Mammary epithelial cell (primary cell): ENCODE measurements at regions of chr19 and their contacts with region 1.

Region 1: DNA sequence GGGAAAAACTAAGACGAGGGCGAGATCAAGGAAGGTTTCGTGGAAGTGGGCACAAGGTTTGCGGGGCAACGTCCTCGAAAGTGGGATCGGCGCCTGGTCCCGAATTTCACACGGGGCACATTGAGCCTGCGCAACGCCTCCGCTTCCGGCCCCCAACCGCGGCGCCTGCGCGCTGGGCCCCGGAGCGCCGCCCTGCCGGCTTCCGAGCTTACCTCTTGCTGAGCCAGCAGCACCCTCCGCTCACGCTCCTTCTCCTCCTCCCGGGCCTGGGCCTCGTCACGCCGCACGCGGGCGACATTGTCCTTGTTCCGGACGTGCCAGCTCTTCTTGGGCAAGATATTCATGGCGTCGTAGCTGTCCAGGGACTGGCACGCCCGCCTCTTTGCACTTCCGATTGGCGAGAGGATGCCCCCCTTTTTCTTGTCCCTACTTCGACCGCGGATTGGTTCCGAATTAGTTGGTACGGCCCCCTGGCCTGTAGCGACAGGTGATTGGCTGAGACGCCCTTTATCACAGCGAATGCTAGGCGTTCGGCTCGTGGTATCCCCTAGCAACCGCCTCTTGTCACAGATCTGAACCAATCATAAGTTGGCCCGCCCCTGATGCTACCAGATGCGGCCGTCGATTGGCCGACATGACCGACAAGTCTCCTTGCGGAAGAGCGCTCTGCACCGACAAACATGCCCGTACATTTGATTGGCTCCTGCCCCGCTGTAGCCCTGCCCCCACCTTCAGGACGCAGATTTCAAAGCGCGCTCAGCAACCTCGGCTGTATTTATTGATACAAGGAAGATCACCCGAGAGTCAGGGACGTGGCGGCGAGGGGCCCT is at the start of gene LENG1:
- DNase-seq: peak; percentile 100
- H3K4me3 ChIP-seq: peak within 1 kb of the TSS; percentile 66 to 87 (median 76)
- H3K27ac ChIP-seq: peak within 1 kb of the TSS; percentile 82
- H3K4me1 ChIP-seq: peaks cover 23% of the 10 kb centered on the region
- H3K27me3 ChIP-seq: no peaks in the 10 kb centered on the region
- CTCF ChIP-seq: peak in 1 of 2 donors; percentile 30
- total RNA-seq, gene LENG1: 2.3 to 5.9 TPM

Region 2: GRCh38 chr19:53849237-53849676 is 310.3 kb before region 1 on chr19:
- CTCF ChIA-PET with region 1: no interaction called
- dilution Hi-C with region 1: no loop called
- in situ Hi-C with region 1: no loop called
- intact Hi-C with region 1: no loop called
- DNase-seq: no peak
- H3K4me3 ChIP-seq: no peak overlapping the region
- H3K27ac ChIP-seq: no peak overlapping the region
- H3K4me1 ChIP-seq: no peaks in the 10 kb centered on the region
- H3K27me3 ChIP-seq: no peaks in the 10 kb centered on the region
- CTCF ChIP-seq: no peak

Region 3: GRCh38 chr19:53867225-53868090 is 292.1 kb before region 1 on chr19 and contains the start of gene MYADM:
- CTCF ChIA-PET with region 1: no interaction called
- dilution Hi-C with region 1: no loop called
- in situ Hi-C with region 1: no loop called
- intact Hi-C with region 1: loop called (anchors 2 kb)
- DNase-seq: peak; percentile 97
- H3K4me3 ChIP-seq: peak within 1 kb of the TSS; percentile 45 to 69 (median 67)
- H3K27ac ChIP-seq: peak within 1 kb of the TSS; percentile 83
- H3K4me1 ChIP-seq: peaks cover 11% of the 10 kb centered on the region
- H3K27me3 ChIP-seq: no peaks in the 10 kb centered on the region
- CTCF ChIP-seq: no peak
- total RNA-seq, gene MYADM: 26.5 to 64.1 TPM

Region 4: DNA sequence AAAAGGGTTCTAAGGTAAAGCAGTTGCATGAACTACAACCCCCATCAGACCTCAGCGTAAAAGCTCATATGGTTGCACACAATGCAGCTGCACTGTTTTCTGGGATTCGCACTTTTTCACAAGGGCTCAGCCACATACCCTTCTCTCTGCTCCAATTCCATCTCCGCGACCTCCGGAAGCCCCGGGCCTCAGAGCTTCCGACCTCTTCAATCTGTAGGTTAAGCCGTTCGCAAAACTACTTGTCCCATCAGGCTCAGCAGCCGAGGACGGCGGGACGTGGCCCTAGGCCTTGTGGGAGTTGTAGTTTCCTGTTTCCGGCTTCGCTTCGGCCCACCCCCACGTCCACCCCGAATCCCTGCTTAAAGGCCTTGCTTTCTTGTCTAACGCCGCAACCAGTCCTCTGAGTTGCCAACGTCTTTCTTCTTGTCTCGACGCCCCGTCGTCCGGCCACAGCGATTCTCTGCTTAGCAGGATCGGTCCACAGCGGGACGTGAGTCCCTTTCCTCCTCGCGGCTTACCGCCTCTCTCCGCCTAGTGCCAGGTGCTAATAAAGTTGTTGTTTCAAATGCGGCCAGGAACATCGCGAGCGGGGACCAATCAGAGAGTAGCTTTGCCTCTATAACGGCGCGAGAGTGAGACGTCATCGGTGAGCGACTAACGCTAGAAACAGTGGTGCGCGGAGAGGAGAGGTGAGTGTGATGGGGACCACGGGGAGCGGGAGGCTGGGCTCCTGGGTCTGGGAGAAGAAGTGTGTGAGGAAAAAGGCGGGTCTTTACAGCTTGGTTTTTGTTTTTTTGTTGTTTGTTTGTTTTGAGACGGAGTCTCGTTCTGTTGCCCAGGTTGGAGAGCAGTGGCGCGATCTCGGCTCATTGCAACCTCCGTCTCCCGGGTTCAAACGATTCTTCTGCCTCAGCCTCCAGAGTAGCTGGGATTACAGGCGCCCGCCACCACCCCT is 44.2 kb before region 1 on chr19 and contains the starts of genes PRPF31 and TFPT:
- CTCF ChIA-PET with region 1: no interaction called
- dilution Hi-C with region 1: loop called (anchors 5 kb)
- in situ Hi-C with region 1: no loop called
- intact Hi-C with region 1: no loop called
- DNase-seq: peak; percentile 98
- H3K4me3 ChIP-seq: peak within 1 kb of the TSS; percentile 75 to 92 (median 87)
- H3K27ac ChIP-seq: peak within 1 kb of the TSS; percentile 80
- H3K4me1 ChIP-seq: peaks cover 8% of the 10 kb centered on the region
- H3K27me3 ChIP-seq: no peaks in the 10 kb centered on the region
- CTCF ChIP-seq: no peak
- total RNA-seq, gene PRPF31: 34.2 to 56.4 TPM
- total RNA-seq, gene TFPT: 9.3 to 23.2 TPM

Region 5: GRCh38 chr19:54137086-54137921 is 22.3 kb before region 1 on chr19 and contains the start of gene CNOT3:
- CTCF ChIA-PET with region 1: interaction called, 6 read pairs
- dilution Hi-C with region 1: no loop called
- in situ Hi-C with region 1: no loop called
- intact Hi-C with region 1: loop called (anchors 1 kb)
- DNase-seq: peak; percentile 100
- H3K4me3 ChIP-seq: peak within 1 kb of the TSS; percentile 67 to 86 (median 69)
- H3K27ac ChIP-seq: peak within 1 kb of the TSS; percentile 59
- H3K4me1 ChIP-seq: peaks cover 18% of the 10 kb centered on the region
- H3K27me3 ChIP-seq: no peaks in the 10 kb centered on the region
- CTCF ChIP-seq: no peak
- total RNA-seq, gene CNOT3: 4.3 to 54.1 TPM

Region 6: GRCh38 chr19:54203151-54203611 is 43.6 kb after region 1 on chr19:
- CTCF ChIA-PET with region 1: no interaction called
- dilution Hi-C with region 1: loop called (anchors 5 kb)
- in situ Hi-C with region 1: no loop called
- intact Hi-C with region 1: no loop called
- DNase-seq: no peak
- H3K4me3 ChIP-seq: peak overlapping the region in 2 of 3 experiments; percentile 55 to 92
- H3K27ac ChIP-seq: no peak overlapping the region
- H3K4me1 ChIP-seq: peaks cover 36% of the 10 kb centered on the region
- H3K27me3 ChIP-seq: no peaks in the 10 kb centered on the region
- CTCF ChIP-seq: no peak

Region 7: GRCh38 chr19:54231077-54231931 is 71.7 kb after region 1 on chr19:
- CTCF ChIA-PET with region 1: no interaction called
- dilution Hi-C with region 1: no loop called
- in situ Hi-C with region 1: no loop called
- intact Hi-C with region 1: loop called (anchors 2 kb)
- DNase-seq: peak; percentile 62
- H3K4me3 ChIP-seq: no peak overlapping the region
- H3K27ac ChIP-seq: no peak overlapping the region
- H3K4me1 ChIP-seq: no peaks in the 10 kb centered on the region
- H3K27me3 ChIP-seq: no peaks in the 10 kb centered on the region
- CTCF ChIP-seq: peak; percentile 85 to 94

Region 8: DNA sequence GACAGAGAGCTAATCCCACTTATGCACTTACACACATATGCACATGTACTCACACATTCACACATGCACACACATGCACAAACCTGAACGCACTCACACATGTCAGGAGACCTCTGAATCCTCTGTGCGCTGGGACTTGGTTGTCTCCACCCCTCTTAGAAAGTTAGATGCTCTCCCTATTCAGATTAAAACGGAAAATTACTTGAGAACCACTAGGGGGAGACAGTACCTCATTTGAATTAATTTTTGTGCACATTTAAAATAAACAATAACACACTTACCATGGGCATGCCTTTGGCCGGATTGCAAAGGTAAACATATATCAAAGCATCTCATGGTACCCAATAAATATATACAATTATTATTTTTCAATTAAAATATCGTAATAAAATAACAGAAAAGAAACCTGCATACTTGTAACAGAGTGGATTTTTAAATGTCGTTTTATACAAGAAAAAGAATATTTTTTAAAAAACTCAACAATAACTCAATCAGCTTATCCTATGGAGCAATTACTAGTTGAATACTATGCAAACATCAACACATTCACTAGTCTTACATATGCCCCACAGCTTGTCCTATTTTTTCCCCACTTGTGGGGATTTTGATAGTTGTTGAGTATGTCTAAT is 493.7 kb after region 1 on chr19:
- CTCF ChIA-PET with region 1: no interaction called
- dilution Hi-C with region 1: no loop called
- in situ Hi-C with region 1: no loop called
- intact Hi-C with region 1: no loop called
- DNase-seq: no peak
- H3K4me3 ChIP-seq: no peak overlapping the region
- H3K27ac ChIP-seq: no peak overlapping the region
- H3K4me1 ChIP-seq: no peaks in the 10 kb centered on the region
- H3K27me3 ChIP-seq: no peaks in the 10 kb centered on the region
- CTCF ChIP-seq: peak; percentile 36 to 48